ENCODE measurements at regions of chr15 and their contacts with region 1.

Region 1: GRCh38 chr15:76185716-76186115 is 125.6 kb downstream of the ETFA start:
- DNase-seq: peak; percentile 83 to 85
- ATAC-seq: peak; percentile 51 to 86; a peak in 4 of 6 replicates
- H3K4me3 ChIP-seq: no peak overlapping the region
- H3K27ac ChIP-seq: peak overlapping the region in 1 of 2 experiments; percentile 12; a peak in 2 of 6 replicates
- H3K4me1 ChIP-seq: peaks cover 3% of the 10 kb centered on the region; the same call in 2 of the 3 replicates
- CTCF ChIP-seq: peak; percentile 37; the same call in 2 of the 3 replicates
- EP300 ChIP-seq: no peak
- POLR2A ChIP-seq: no peak
- RAD21 ChIP-seq: peak; percentile 51 to 75

Region 2: DNA sequence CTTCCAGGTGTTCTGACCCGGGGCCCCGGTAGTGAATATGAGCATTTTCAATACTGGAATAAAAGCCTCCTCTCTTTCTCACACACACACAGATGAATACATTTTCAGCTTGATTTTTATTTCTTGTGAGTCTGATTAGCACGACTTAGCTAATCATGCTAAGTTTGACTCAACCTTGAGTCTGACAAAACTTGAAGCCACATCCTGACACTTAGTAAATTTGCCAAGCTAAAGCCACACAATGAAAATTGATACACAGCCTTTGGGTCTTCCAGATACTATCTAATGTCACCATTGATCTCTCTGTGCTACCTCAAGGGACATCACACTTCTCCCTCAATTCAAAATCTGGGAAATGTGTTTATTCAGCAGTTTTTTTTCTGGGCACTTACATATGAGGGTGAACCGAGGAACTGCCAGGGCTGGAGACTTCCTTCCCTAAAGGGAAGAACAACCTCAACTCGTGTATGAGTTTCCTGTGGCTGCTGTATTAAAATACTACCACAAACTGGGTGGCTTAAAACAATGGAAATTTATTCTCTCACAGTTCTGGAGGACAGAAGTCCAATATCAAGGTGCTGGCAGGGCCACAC is 107.3 kb before region 1 on chr15:
- CTCF ChIA-PET with region 1: no interaction called
- POLR2A ChIA-PET with region 1: no interaction called
- DNase-seq: no peak
- ATAC-seq: no peak
- H3K4me3 ChIP-seq: no peak overlapping the region
- H3K27ac ChIP-seq: no peak overlapping the region
- H3K4me1 ChIP-seq: no peaks in the 10 kb centered on the region
- CTCF ChIP-seq: no peak
- EP300 ChIP-seq: no peak
- POLR2A ChIP-seq: no peak
- RAD21 ChIP-seq: no peak

Region 3: GRCh38 chr15:76196269-76197231 is 10.8 kb after region 1 on chr15:
- CTCF ChIA-PET with region 1: interaction called, 115 read pairs
- POLR2A ChIA-PET with region 1: interaction called, 4 read pairs
- DNase-seq: peak; percentile 85 to 91
- ATAC-seq: peak; percentile 65 to 82
- H3K4me3 ChIP-seq: no peak overlapping the region
- H3K27ac ChIP-seq: peak overlapping the region; percentile 71 to 87
- H3K4me1 ChIP-seq: peaks cover 44% of the 10 kb centered on the region
- CTCF ChIP-seq: no peak
- EP300 ChIP-seq: no peak
- POLR2A ChIP-seq: no peak
- RAD21 ChIP-seq: no peak

Region 4: DNA sequence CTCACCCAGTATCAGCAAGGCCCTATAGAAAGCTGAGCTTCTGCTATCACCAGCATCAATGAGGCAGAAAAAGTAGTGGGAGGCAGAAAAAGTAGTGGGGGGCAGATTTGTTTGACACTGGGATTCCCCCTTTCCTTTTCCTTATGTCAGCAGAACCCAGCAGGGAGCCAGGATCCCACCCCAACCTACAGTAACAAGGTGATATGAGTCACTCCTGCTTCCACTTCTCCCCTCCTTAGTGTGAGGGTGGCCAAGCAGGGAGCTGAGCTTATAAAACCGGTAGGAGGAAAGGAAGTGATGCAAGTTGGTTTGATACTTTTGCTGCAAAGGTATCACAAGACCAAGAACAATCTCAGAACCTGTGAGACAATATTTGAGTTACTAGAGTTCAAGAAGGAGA is 590.8 kb after region 1 on chr15:
- CTCF ChIA-PET with region 1: no interaction called
- POLR2A ChIA-PET with region 1: no interaction called
- DNase-seq: no peak
- ATAC-seq: no peak
- H3K4me3 ChIP-seq: no peak overlapping the region
- H3K27ac ChIP-seq: no peak overlapping the region
- H3K4me1 ChIP-seq: 0 out of 3 replicates have a peak, but pooled peaks cover 7% of the 10 kb centered on the region
- CTCF ChIP-seq: no peak
- EP300 ChIP-seq: no peak
- POLR2A ChIP-seq: no peak
- RAD21 ChIP-seq: no peak

Region 5: GRCh38 chr15:76866716-76867321 is 681.1 kb after region 1 on chr15:
- CTCF ChIA-PET with region 1: interaction called, 34 read pairs
- POLR2A ChIA-PET with region 1: no interaction called
- DNase-seq: peak; percentile 18 to 52
- ATAC-seq: peak in 1 of 2 experiments; percentile 75; a peak in 4 of 6 replicates
- H3K4me3 ChIP-seq: no peak overlapping the region
- H3K27ac ChIP-seq: no peak overlapping the region
- H3K4me1 ChIP-seq: no peaks in the 10 kb centered on the region
- CTCF ChIP-seq: peak; percentile 87
- EP300 ChIP-seq: no peak
- POLR2A ChIP-seq: no peak
- RAD21 ChIP-seq: peak; percentile 83 to 91

Measured in A549 (cell line).